ENCODE measurements at regions of chr21 and their contacts with region 1.

Region 1: DNA sequence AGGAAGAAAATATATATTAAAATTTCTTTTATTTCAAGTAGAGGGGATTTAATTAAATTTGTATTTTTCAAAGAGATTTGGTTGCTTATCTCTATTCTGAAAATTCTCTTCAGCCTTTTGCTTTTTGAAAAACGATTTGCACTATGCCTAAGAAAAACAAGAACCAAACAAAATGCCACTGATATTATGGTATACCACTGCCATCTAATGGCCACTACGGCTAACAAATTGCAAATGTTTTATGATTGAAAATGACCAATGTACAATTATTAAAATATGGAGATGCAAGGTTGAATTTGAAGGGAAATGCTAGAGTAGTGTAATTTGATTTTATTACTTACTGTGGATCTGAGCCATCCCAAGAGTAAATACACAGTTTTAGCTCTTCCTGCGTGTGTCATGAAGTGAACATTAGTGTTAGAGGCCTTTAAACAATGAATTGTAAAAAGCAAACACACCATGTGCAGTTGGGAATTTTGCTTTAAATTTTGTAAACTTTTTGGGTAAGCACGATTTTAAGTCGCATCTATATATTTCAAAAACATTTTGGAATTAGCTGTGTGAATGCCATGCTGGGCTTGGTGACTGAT is 137.4 kb upstream of the USP25 start:
- DNase-seq: peak; percentile 67
- H3K4me3 Mint-ChIP-seq: no peak overlapping the region
- H3K27ac Mint-ChIP-seq: no peak overlapping the region
- H3K4me1 Mint-ChIP-seq: no peaks in the 10 kb centered on the region
- H3K27me3 Mint-ChIP-seq: peaks cover 16% of the 10 kb centered on the region

Region 2: DNA sequence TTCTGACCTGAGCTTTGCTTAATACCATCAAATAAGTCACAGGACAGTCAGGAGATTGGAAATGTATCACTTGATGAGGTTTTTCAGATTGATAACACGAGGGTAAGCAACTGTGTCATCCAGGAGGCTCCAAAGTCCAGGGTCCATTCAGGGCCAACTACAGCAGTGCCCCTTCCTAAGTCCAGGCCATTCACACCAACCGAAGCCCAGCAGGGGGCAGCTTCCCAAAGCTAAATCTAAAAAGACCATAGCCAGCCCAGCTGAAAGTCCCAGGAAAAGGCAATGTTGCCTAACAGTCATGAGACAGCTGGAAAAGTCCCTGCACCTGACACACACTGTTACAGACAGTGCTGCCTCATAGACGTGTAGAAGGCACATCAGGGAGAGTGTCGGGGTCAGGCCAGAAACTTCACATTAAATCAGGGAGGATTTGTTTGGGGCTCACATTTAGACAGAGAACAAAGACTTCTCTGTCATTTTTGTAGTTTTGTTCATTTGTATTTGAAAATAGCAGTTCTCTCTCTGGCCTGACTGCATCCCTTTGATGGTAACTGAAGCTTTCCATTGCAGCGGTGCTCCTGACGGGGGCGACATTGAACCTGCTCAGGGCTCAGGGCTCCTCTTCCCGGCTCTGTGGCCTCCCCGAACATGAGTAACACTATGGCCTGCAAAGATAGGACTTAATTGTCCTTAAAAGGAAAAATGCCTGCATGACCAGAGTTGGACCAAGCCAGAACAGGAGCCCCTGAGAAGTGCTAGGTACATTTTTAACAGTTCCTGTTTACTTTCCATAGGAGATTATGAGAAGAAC is 728.0 kb before region 1 on chr21:
- intact Hi-C with region 1: loop called (anchors 10 kb)
- DNase-seq: peak; percentile 82
- H3K4me3 Mint-ChIP-seq: no peak overlapping the region
- H3K27ac Mint-ChIP-seq: no peak overlapping the region
- H3K4me1 Mint-ChIP-seq: peaks cover 6% of the 10 kb centered on the region
- H3K27me3 Mint-ChIP-seq: peaks cover 4% of the 10 kb centered on the region